Calu3 (cell line): ENCODE measurements at regions of chr6 and their contacts with region 1.

Region 1: GRCh38 chr6:105793130-105793529 is 293.0 kb upstream of the PRDM1 start:
- DNase-seq: peak; percentile 43
- H3K4me3 Mint-ChIP-seq: no peak overlapping the region
- H3K27ac Mint-ChIP-seq: peak overlapping the region; percentile 44
- H3K4me1 Mint-ChIP-seq: peaks cover 56% of the 10 kb centered on the region
- H3K27me3 Mint-ChIP-seq: no peaks in the 10 kb centered on the region
- CTCF ChIP-seq: no peak

Region 2: DNA sequence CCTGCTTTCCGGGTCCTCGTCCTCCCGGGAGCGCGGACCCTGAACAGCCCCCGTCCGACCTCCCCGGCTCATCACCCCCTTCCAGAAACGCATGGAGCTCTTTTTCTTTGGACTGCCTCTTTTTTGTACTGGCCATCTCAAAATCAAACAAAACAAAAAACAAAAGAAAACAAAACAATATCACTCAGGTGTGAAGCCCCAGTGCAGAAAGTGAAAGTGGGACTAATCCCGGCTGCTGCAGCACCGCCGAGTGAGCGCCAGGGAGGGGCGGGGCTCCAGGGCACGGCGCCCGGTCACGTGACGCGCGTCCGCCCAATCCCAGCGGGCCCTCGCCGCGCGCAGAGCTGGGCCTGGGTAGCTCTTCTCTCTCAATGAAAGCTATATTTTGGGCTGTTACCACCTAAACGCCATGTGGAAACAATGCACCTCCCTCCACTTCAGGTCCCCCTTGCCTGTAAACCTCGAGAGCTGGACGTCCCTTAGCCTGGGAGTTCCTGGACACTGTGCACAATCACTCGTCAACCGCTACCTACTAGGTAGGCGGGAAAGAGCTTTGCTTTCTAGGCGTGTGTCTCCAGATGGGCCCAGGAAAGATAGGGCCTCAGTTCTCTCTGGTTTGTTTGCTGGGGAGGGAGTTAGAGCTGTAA is 199.3 kb after region 1 on chr6:
- CTCF ChIA-PET with region 1: interaction called, 3 read pairs
- intact Hi-C with region 1: loop called (anchors 5 kb)
- DNase-seq: peak; percentile 90
- H3K4me3 Mint-ChIP-seq: peak overlapping the region; percentile 87
- H3K27ac Mint-ChIP-seq: peak overlapping the region; percentile 70
- H3K4me1 Mint-ChIP-seq: no peaks in the 10 kb centered on the region
- H3K27me3 Mint-ChIP-seq: peaks cover 47% of the 10 kb centered on the region
- CTCF ChIP-seq: no peak